Mammary epithelial cell (primary cell): ENCODE measurements at regions of chr19 and their contacts with region 1.

Region 1: DNA sequence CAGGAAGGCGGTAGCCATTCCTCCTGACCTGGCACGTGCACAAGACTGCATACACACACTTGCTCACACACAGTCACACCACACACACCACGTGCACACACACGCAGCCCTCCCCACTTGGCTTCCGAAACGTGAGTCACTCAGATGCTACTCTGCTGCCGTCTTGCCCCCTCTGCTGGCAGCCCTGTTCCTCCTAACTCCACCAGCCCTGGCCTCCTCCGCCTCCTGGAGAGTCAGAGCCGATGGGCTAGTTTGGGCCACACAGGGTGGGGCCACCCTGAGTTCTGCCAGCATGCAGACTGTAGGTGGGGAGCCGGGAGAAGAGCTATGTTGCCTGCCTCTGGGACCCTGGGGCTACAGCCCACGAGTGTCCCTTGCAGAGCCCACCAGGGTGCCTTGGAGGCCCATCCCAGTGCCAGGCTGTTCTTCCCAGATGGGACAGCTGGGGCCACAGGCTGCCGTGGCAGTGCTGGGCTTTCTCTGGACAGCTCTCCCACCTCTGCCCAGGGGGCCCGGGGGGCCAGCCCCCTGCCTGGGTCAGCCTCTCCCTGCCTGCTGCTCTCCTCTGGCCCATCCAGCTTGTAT is 12.1 kb downstream of the PIN1 start:
- DNase-seq: peak; percentile 71
- H3K4me3 ChIP-seq: no peak overlapping the region
- H3K27ac ChIP-seq: no peak overlapping the region
- H3K4me1 ChIP-seq: no peaks in the 10 kb centered on the region
- H3K27me3 ChIP-seq: no peaks in the 10 kb centered on the region
- CTCF ChIP-seq: peak; percentile 70 to 78

Region 2: DNA sequence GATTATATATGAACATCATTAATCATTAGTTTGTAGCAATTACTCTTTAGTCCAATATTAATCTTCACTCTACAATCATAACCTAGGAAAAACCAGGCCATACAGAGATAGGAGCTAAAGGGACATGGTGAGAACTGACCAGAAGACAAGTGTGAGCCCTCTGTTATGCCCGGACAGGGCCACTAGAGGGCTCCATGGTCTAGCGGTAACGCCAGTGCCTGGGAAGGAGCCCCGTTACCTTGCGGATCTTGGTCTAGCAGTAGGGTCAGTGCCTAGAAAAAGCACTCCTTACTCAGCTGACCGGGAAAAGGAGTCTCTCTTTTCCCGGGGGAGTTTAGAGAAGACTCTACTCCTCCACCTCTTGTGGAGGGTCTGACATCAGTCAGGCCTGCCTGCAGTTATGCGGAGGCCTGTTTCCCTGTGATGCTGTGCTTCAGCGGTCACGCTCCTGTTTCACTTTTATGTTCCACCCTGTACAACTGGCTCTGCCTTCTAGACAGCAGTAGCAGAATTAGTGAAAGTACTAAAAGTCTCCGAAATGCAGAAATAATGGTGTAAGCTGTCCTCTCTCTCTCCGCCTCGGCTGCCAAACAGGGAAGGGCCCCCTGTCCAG is 641.6 kb before region 1 on chr19:
- CTCF ChIA-PET with region 1: no interaction called
- dilution Hi-C with region 1: no loop called
- in situ Hi-C with region 1: no loop called
- intact Hi-C with region 1: loop called (anchors 5 kb)
- DNase-seq: peak; percentile 53
- H3K4me3 ChIP-seq: peak overlapping the region; percentile 21 to 33 (median 27)
- H3K27ac ChIP-seq: no peak overlapping the region
- H3K4me1 ChIP-seq: no peaks in the 10 kb centered on the region
- H3K27me3 ChIP-seq: no peaks in the 10 kb centered on the region
- CTCF ChIP-seq: peak; percentile 71 to 89

Region 3: DNA sequence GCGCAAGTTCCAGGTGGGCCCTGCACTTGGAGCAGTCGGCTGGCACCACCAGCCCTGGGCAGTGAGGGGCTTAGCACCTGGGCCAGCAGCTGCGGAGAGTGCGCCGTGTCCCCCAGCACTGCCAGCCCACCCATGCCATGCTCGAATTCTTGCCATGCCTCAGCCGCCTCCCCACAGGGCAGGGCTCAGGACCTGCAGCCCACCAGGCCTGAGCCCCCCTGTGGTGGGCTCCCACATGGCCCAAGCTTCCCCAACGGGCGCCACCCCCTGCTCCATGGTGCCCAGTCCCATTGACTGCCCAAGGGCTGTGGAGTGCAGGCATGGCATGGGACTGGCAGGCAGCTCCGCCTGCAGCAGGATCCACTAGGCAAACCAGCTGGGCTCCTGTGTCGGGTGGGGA is 299.3 kb before region 1 on chr19:
- CTCF ChIA-PET with region 1: no interaction called
- dilution Hi-C with region 1: no loop called
- in situ Hi-C with region 1: no loop called
- intact Hi-C with region 1: no loop called
- DNase-seq: no peak
- H3K4me3 ChIP-seq: no peak overlapping the region
- H3K27ac ChIP-seq: no peak overlapping the region
- H3K4me1 ChIP-seq: no peaks in the 10 kb centered on the region
- H3K27me3 ChIP-seq: no peaks in the 10 kb centered on the region
- CTCF ChIP-seq: no peak

Region 4: GRCh38 chr19:10010247-10010691 is 163.1 kb after region 1 on chr19 and contains the start of gene COL5A3:
- CTCF ChIA-PET with region 1: no interaction called
- dilution Hi-C with region 1: no loop called
- in situ Hi-C with region 1: no loop called
- intact Hi-C with region 1: no loop called
- DNase-seq: peak; percentile 51
- H3K4me3 ChIP-seq: peak within 1 kb of the TSS; percentile 33 to 43 (median 36)
- H3K27ac ChIP-seq: no peak within 1 kb of the TSS
- H3K4me1 ChIP-seq: peaks cover 15% of the 10 kb centered on the region
- H3K27me3 ChIP-seq: no peaks in the 10 kb centered on the region
- CTCF ChIP-seq: no peak
- total RNA-seq, gene COL5A3: 0.33 to 4.5 TPM